ENCODE measurements at regions of chr7 and their contacts with region 1.

Region 1: DNA sequence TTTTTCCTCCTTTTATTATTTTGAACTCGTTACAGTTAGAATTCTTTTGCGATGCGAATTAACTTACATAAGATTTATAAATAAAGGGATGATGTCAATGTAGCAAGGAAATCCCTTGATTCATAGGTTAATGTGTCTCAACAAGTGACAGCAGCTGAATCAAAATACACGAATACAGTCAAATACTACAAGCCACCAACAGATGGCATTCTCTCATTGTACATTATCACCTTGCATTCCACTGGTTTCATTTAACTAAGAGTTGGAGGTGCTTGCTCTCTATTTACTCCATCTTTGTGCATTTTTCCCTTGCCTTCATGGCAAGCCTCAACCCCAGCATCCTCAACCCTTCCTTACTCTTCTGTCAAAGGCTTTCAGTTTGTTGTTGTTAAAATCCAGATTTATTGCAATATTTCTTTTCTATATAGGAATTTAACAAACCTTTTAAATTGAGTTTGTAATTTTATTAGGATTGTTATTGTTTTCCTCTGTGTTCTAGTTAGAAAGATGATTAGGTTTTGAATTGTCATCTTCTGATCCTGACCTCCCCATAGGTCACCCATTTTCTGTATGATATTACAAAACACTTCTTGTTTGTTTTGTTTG is 78.3 kb downstream of the SLC25A40 start:
- H3K4me3 ChIP-seq: no peak overlapping the region
- H3K27ac ChIP-seq: no peak overlapping the region
- H3K4me1 ChIP-seq: no peaks in the 10 kb centered on the region
- CTCF ChIP-seq: no peak; the same call in 1 of the 2 replicates

Region 2: DNA sequence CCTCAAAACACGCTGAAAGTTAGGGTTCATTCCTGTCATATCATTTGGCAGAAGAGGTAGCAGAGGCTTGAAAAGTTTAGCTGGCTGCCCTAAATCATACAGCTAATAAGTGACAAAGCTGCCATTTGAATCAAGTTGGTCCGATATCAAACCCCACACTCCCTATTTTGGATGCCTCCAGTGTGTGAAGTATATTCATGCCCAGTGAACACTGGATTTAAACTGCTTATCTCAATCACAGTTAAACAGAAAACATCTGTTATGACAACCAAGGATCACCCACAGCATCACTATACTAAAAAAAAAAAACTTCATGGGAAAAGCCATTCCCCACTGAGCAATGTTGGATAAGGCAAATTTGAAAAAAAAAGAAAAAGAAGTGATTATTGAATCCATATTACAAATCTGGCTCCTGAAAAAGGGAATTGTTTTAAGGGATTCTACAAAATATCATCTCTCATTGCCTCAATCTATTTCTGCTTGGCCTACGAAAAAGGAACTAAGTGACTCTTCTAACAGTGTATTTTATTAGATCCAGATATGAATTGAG is 245.5 kb before region 1 on chr7:
- CTCF ChIA-PET with region 1: no interaction called
- POLR2A ChIA-PET with region 1: no interaction called
- H3K4me3 ChIP-seq: no peak overlapping the region
- H3K27ac ChIP-seq: no peak overlapping the region
- H3K4me1 ChIP-seq: no peaks in the 10 kb centered on the region
- CTCF ChIP-seq: no peak

Region 3: DNA sequence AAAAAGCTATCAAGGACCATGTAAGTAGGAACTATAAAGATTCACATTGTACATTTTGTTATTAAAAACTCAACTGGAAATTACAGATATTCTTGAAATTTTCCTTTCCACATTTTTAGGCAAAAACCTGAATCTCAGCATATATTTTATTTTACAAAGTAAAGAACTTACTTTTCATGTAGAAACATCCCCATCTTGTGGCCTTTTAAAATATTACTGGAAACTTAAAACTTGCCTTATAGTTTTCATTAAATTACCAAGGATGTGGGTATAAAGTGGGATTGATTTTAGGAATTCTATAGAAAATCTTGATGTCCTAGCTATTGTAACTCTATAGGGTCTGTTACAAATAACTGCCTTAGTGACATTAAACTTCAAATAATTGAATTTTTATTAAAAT is 89.0 kb after region 1 on chr7:
- CTCF ChIA-PET with region 1: interaction called, 25 read pairs
- POLR2A ChIA-PET with region 1: no interaction called
- H3K4me3 ChIP-seq: no peak overlapping the region
- H3K27ac ChIP-seq: no peak overlapping the region
- H3K4me1 ChIP-seq: no peaks in the 10 kb centered on the region
- CTCF ChIP-seq: no peak

Region 4: GRCh38 chr7:88111136-88111743 is 313.3 kb after region 1 on chr7:
- CTCF ChIA-PET with region 1: interaction called, 20 read pairs
- POLR2A ChIA-PET with region 1: no interaction called
- H3K4me3 ChIP-seq: no peak overlapping the region
- H3K27ac ChIP-seq: no peak overlapping the region
- H3K4me1 ChIP-seq: peaks cover 2% of the 10 kb centered on the region
- CTCF ChIP-seq: no peak

Region 5: GRCh38 chr7:88169717-88170320 is 371.9 kb after region 1 on chr7:
- CTCF ChIA-PET with region 1: interaction called, 14 read pairs
- POLR2A ChIA-PET with region 1: no interaction called
- H3K4me3 ChIP-seq: no peak overlapping the region
- H3K27ac ChIP-seq: no peak overlapping the region
- H3K4me1 ChIP-seq: no peaks in the 10 kb centered on the region
- CTCF ChIP-seq: no peak

Measured in HEK293 (cell line).